GM18951 (cell line): ENCODE measurements at regions of chr21 and their contacts with region 1.

Region 1: GRCh38 chr21:25561668-25562641 is 45.3 kb downstream of the MRPL39 start:
- POLR2A ChIP-seq: no peak

Region 2: DNA sequence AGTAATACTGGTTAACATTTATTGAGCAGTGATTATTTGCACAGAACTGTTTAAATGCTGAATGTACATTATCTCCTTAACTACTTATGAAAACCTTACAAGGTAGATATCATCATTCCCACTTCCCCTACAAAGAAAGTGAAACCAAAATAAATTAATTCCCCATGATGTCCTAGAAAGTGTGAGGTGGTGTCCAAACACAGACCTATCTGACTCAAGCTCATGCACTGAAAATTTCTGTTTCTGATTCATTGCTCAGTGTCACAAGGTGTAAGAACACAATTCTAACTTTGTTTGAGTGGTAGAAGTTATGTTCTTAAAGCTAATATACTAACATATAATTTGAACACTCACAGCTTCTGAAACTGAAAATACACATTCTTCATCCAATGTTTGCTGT is 133.4 kb before region 1 on chr21:
- in situ Hi-C with region 1: loop called (anchors 5 kb)
- POLR2A ChIP-seq: no peak

Region 3: GRCh38 chr21:25501996-25502665 is 59.8 kb before region 1 on chr21:
- in situ Hi-C with region 1: loop called (anchors 10 kb)
- POLR2A ChIP-seq: no peak

Region 4: GRCh38 chr21:25801217-25802014 is 239.5 kb after region 1 on chr21:
- in situ Hi-C with region 1: no loop called
- POLR2A ChIP-seq: no peak

Region 5: DNA sequence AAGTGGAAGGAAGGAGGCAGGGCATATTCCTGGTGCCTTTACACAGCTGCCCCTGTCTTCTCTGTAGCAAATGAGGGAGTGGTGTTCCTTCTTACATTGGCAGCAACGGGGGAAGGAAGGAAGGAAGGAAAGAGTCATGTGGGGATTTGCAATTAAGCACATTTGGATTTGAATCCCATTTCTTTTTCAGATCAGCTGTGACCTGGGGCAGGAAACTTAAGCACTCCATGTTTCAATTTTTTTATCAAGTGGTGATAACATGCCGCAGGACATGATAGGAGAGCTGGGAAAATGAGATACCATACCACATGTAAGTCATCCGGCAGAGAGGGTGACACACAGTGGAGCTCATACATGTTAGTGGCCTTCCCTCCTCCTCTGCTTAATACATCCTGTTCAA is 421.8 kb after region 1 on chr21:
- in situ Hi-C with region 1: no loop called
- POLR2A ChIP-seq: no peak